Activated B cell treated with CpG ODN at 0.5 μM for 24 hours (primary cell): ENCODE measurements at regions of chr19 and their contacts with region 1.

Region 1: DNA sequence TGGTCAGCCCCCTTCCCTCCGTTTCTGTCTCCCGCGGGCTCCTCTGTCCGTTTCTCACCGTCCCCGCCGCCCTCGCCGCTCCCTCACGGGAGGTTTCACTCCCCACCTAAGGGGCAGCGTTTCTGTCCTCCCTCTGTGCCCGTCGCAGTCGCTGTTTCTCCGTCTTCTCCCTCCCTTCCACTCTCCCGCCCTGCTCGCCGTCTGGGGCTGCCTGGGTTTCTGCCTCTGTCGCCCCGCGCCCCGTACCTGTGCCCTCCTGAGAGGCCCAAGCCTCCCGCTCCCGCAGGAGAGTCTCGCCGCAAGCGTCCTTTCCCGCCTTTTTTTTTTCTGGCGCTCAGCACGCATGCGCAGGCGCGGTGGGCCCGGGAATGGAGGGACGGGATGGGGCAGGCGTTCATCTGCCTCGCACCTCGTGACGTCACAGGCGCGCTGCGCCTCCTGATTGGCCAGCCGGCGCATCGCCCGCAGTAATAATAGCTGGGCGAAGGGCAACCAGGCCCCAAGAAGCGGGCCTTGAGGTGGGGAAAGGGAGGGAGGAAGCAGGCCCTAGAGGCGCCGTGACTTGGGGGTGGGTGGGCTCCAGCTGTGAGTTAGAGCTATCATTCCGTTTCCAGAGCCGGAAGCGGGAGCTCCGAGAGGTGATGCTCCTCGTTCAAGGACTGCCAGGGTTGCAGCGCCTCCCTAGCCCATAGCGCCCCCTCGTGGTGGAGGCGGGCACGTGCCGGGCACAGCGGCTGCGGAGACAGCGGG is 15.4 kb downstream of the SSC5D start:
- DNase-seq: peak; percentile 97
- ATAC-seq: peak; percentile 95
- H3K4me3 Mint-ChIP-seq: peak overlapping the region; percentile 88
- H3K27ac Mint-ChIP-seq: peak overlapping the region; percentile 91
- H3K4me1 Mint-ChIP-seq: peaks cover 11% of the 10 kb centered on the region
- H3K27me3 Mint-ChIP-seq: peaks cover 3% of the 10 kb centered on the region
- CTCF ChIP-seq: peak; percentile 79

Region 2: DNA sequence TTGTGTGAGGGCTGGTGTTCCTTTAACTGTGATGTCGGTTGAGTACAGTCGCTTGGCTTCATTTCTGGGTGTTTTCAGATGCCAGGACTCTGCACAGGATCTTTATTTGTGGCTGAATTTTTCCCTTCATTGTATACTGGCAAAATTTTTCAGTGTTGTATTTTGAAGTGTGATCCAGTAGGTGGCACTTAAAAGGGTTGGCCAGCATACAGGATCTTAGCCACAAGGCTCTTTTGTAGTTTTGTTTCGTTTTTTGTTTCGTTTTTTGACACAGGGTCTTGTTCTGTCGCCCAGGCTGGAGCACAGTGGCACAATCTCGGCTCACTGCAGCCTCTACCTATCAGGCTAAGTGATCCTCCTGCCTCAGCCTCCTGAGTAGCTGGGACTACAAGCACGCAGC is 620.9 kb before region 1 on chr19:
- CTCF ChIA-PET with region 1: interaction called, 5 read pairs
- POLR2A ChIA-PET with region 1: no interaction called
- intact Hi-C with region 1: loop called (anchors 5 kb)
- DNase-seq: no peak
- ATAC-seq: no peak
- H3K4me3 Mint-ChIP-seq: no peak overlapping the region
- H3K27ac Mint-ChIP-seq: no peak overlapping the region
- H3K4me1 Mint-ChIP-seq: peaks cover 4% of the 10 kb centered on the region
- H3K27me3 Mint-ChIP-seq: peaks cover 26% of the 10 kb centered on the region
- CTCF ChIP-seq: no peak

Region 3: DNA sequence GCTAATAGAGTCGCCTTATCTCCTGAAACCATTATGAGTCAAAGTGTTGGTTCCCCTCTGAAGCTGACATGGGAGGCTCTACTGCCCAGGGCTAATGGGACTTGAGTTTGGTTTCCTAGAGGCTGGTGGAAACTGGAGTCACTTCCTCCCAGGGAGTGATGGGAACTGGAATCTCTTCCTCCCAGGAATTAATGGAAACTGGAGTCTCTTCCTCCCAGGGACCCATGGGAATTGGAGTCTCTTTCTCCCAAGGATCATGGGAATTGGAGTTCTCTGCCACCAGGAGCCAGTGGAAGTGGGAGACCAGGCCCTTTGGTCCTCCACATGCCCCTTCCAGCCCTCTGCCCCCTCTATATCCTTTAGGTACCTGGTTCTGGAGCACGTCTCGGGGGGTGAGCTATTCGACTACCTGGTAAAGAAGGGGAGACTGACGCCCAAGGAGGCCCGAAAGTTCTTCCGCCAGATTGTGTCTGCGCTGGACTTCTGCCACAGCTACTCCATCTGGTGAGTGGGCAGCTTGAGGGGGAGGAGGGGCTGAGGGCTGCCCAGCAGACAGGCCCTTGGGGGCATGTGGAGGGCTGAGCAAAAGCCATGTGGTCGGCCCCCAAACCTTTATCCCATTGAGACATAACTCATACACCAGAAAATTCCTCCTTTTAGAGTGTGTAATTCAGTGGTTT is 214.4 kb before region 1 on chr19:
- CTCF ChIA-PET with region 1: interaction called, 3 read pairs
- POLR2A ChIA-PET with region 1: no interaction called
- intact Hi-C with region 1: loop called (anchors 2 kb)
- DNase-seq: no peak
- ATAC-seq: no peak
- H3K4me3 Mint-ChIP-seq: no peak overlapping the region
- H3K27ac Mint-ChIP-seq: no peak overlapping the region
- H3K4me1 Mint-ChIP-seq: peaks cover 4% of the 10 kb centered on the region
- H3K27me3 Mint-ChIP-seq: no peaks in the 10 kb centered on the region
- CTCF ChIP-seq: no peak

Region 4: GRCh38 chr19:55461259-55461973 is 42.3 kb before region 1 on chr19 and contains the start of gene ISOC2:
- CTCF ChIA-PET with region 1: interaction called, 50 read pairs
- POLR2A ChIA-PET with region 1: interaction called, 11 read pairs
- intact Hi-C with region 1: no loop called
- DNase-seq: peak; percentile 100
- ATAC-seq: peak; percentile 96
- H3K4me3 Mint-ChIP-seq: peak within 1 kb of the TSS; percentile 89
- H3K27ac Mint-ChIP-seq: peak within 1 kb of the TSS; percentile 82
- H3K4me1 Mint-ChIP-seq: peaks cover 22% of the 10 kb centered on the region
- H3K27me3 Mint-ChIP-seq: no peaks in the 10 kb centered on the region
- CTCF ChIP-seq: no peak
- total RNA-seq, gene ISOC2: 28.7 and 29.0 TPM in 2 replicates

Region 5: DNA sequence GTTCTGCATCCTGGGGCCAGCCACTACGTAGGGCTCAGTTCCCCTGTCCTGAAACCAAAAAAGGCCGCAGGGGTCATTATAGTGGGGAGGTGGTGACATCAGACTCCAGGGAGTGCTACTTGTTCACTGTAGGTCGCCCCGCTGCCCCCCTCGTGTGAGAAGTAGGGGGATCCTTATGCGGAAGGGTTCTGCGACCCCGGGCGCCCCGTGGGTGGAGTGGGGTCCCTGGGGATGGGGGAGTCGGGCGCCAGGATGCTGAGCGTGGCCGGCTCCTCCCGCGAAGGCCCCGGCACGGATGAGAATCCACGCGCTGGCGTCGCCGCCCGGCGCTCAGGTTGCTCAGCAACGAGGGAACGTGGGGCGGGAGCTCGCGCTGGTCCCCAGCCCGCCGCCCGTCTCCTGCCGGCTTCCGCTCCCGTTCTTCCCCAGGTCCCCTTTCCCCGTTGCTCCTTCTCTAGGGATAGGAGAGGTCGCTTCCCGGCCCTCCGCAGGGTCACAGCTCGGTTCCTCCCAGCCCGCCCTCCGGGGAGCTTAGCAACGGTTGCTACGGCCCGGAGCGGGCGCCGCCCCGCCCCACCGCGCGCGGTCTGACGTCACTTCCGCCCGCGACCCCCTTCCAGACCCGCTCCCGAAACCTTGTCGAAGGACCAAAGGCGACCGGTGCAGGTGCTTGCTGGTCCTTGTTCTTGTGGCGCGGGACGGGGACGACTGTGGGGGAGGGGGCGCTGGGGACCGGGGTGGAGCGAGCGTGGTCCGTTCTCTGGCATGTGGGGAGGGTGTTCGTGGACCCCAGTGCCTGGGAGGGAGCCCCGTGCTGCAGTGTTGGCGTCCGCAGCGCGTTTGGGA is 18.9 kb before region 1 on chr19 and contains the start of gene NAT14:
- CTCF ChIA-PET with region 1: interaction called, 20 read pairs
- POLR2A ChIA-PET with region 1: interaction called, 6 read pairs
- intact Hi-C with region 1: loop called (anchors 2 kb)
- DNase-seq: peak; percentile 77
- ATAC-seq: peak; percentile 70
- H3K4me3 Mint-ChIP-seq: peak within 1 kb of the TSS; percentile 82
- H3K27ac Mint-ChIP-seq: peak within 1 kb of the TSS; percentile 75
- H3K4me1 Mint-ChIP-seq: peaks cover 16% of the 10 kb centered on the region
- H3K27me3 Mint-ChIP-seq: no peaks in the 10 kb centered on the region
- CTCF ChIP-seq: no peak
- total RNA-seq, gene NAT14: 10.9 and 13.8 TPM in 2 replicates